PC-9 (cell line): ENCODE measurements at regions of chr5 and their contacts with region 1.

Region 1: DNA sequence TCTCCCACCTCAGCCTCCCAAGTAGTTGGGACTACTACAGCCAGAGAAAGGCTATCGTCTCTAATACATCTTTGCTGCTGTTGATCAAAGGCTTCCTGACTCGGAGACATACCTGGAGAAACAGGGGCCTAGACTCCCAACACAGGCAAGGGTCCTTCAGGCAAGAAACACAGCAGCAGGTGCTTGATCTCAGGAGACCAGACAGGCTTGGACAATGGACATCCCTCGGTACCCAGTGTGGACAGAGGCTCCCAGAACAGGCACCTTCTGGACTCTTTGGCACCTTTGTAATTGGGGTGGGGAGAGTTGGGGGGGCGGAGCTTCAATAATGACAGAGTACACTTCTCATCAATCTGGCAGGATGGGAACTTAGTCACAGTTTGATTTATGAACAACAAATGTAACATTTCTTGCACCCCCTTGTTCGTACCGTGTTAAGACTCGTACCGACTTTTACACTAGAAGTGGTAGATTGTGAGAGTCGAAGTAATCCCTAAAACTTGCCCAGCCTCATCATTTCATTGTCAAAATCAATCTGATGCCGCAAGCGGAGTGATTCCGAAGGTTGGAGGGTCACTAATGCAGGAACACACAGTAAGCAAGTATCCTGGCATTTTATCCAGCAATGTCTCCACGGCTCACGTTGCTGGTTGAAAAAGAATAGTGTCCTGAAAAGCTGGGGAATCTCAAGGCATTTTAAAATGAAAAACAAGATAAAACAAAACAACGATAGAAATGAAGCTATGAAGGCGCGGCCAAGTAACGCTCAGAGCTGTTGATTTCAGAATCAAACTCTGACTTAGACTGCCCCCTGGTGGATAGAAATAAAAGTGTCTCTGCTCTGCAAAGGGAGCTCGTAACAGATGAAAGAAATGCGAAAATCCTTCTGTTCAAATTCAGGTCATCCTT is 46.4 kb upstream of the STK32A start:
- DNase-seq: peak in 1 of 2 experiments; percentile 29
- H3K4me3 ChIP-seq: no peak overlapping the region
- H3K27ac ChIP-seq: no peak overlapping the region
- H3K4me1 ChIP-seq: no peaks in the 10 kb centered on the region
- H3K27me3 ChIP-seq: 0 out of 2 replicates have a peak, but pooled peaks cover 3% of the 10 kb centered on the region
- CTCF ChIP-seq: peak; percentile 90

Region 2: GRCh38 chr5:146533260-146533857 is 655.1 kb before region 1 on chr5:
- CTCF ChIA-PET with region 1: interaction called, 8 read pairs
- POLR2A ChIA-PET with region 1: no interaction called
- intact Hi-C with region 1: loop called (anchors 1 kb)
- DNase-seq: peak; percentile 39 to 65
- H3K4me3 ChIP-seq: no peak overlapping the region
- H3K27ac ChIP-seq: no peak overlapping the region
- H3K4me1 ChIP-seq: no peaks in the 10 kb centered on the region
- H3K27me3 ChIP-seq: peaks cover 4% of the 10 kb centered on the region; the same call in 1 of the 2 replicates
- CTCF ChIP-seq: peak; percentile 88

Region 3: GRCh38 chr5:146548781-146549449 is 639.5 kb before region 1 on chr5:
- CTCF ChIA-PET with region 1: interaction called, 17 read pairs
- POLR2A ChIA-PET with region 1: no interaction called
- intact Hi-C with region 1: no loop called
- DNase-seq: no peak
- H3K4me3 ChIP-seq: no peak overlapping the region
- H3K27ac ChIP-seq: no peak overlapping the region
- H3K4me1 ChIP-seq: no peaks in the 10 kb centered on the region
- H3K27me3 ChIP-seq: peaks cover 17% of the 10 kb centered on the region
- CTCF ChIP-seq: no peak

Region 4: GRCh38 chr5:147017191-147017590 is 171.3 kb before region 1 on chr5:
- CTCF ChIA-PET with region 1: no interaction called
- POLR2A ChIA-PET with region 1: no interaction called
- intact Hi-C with region 1: no loop called
- DNase-seq: no peak
- H3K4me3 ChIP-seq: no peak overlapping the region
- H3K27ac ChIP-seq: no peak overlapping the region
- H3K4me1 ChIP-seq: no peaks in the 10 kb centered on the region
- H3K27me3 ChIP-seq: no peaks in the 10 kb centered on the region
- CTCF ChIP-seq: no peak